Calu3 (cell line): ENCODE measurements at regions of chr1 and their contacts with region 1.

Region 1: DNA sequence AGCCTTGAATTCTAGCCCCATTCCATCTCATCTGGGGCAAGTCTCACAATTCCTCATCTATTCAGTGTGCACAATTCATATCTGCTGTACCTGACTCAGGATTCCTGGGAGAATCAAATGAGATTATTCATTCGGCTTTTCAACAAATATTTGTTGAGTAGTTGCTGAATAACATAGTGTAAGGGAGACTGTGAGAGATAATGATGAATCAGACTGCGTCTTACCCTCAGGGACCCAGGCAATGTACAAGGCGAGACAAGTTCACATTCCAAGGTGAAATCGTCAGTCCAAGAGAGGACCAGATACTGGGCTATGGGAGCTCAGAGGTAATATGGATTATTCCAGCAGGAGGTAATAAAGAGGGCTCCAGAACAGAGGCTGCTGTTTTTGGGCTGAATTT is 67.8 kb upstream of the SMYD2 start:
- DNase-seq: no peak
- H3K4me3 Mint-ChIP-seq: no peak overlapping the region
- H3K27ac Mint-ChIP-seq: no peak overlapping the region
- H3K4me1 Mint-ChIP-seq: peaks cover 38% of the 10 kb centered on the region
- H3K27me3 Mint-ChIP-seq: peaks cover 14% of the 10 kb centered on the region
- CTCF ChIP-seq: no peak

Region 2: DNA sequence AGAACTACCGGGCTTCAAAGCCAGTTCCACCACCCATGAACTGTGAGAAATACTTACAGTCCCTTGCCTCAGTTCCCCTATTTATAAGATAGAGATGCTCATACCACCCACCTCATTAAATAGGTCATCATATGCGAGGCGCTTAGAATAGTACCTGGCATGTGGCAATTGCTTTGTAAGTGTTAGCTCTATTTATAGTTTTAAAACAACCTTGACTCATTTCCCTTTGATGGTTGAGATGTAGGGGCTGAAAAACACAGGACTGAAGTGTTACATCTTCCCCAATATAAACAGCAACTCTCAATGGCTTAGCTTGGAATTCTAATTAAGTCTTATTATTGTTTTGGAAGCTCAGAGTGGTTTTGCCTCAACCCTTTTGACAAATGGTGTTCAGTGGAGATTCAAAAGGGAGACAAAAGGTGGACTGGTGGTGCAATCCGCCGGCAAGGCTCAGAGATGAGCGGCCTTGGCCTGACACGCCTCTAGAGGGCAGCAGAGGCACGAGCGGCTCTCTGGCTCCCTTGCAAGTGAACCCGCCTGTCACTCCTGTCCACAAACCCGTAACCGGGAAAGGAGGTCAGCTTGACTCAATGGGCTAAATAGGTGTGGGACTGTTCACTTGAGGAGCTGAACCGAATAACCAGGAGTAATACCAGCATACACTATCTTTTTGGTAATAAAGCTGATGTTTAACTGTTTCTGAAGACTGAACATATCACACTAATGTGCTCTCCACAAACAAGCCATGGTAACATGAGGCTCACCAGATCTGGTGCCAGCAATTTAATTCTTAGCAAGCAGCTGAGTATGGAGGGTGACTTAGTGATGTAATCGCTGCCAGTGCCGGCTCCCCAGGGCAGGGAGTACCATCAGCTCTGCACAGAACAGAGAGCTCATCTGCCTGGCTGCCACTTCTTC is 48.3 kb after region 1 on chr1:
- CTCF ChIA-PET with region 1: interaction called, 4 read pairs
- intact Hi-C with region 1: loop called (anchors 1 kb)
- DNase-seq: peak; percentile 92
- H3K4me3 Mint-ChIP-seq: no peak overlapping the region
- H3K27ac Mint-ChIP-seq: no peak overlapping the region
- H3K4me1 Mint-ChIP-seq: peaks cover 13% of the 10 kb centered on the region
- H3K27me3 Mint-ChIP-seq: no peaks in the 10 kb centered on the region
- CTCF ChIP-seq: peak; percentile 90

Region 3: GRCh38 chr1:214632091-214632490 is 419.0 kb after region 1 on chr1:
- CTCF ChIA-PET with region 1: interaction called, 3 read pairs
- intact Hi-C with region 1: loop called (anchors 1 kb)
- DNase-seq: no peak
- H3K4me3 Mint-ChIP-seq: no peak overlapping the region
- H3K27ac Mint-ChIP-seq: no peak overlapping the region
- H3K4me1 Mint-ChIP-seq: no peaks in the 10 kb centered on the region
- H3K27me3 Mint-ChIP-seq: no peaks in the 10 kb centered on the region
- CTCF ChIP-seq: no peak

Region 4: GRCh38 chr1:214637722-214638458 is 424.8 kb after region 1 on chr1:
- CTCF ChIA-PET with region 1: interaction called, 7 read pairs
- intact Hi-C with region 1: loop called (anchors 1 kb)
- DNase-seq: peak; percentile 42
- H3K4me3 Mint-ChIP-seq: no peak overlapping the region
- H3K27ac Mint-ChIP-seq: no peak overlapping the region
- H3K4me1 Mint-ChIP-seq: no peaks in the 10 kb centered on the region
- H3K27me3 Mint-ChIP-seq: no peaks in the 10 kb centered on the region
- CTCF ChIP-seq: peak; percentile 45